CD4-positive, alpha-beta T cell (primary cell): ENCODE measurements at regions of chr11 and their contacts with region 1.

Region 1: GRCh38 chr11:46121724-46122477 is 647 bp upstream of the PHF21A start:
- DNase-seq: peak; percentile 50 to 92 (median 68)
- ATAC-seq: peak; percentile 53
- H3K4me3 ChIP-seq: peak overlapping the region; percentile 72
- H3K4me3 Mint-ChIP-seq: peak overlapping the region; percentile 95
- H3K27ac ChIP-seq: peak overlapping the region in 1 of 2 donors; percentile 53
- H3K27ac Mint-ChIP-seq: peak overlapping the region; percentile 85
- H3K4me1 ChIP-seq: peaks cover 10% of the 10 kb centered on the region
- H3K4me1 Mint-ChIP-seq: peaks cover 34% of the 10 kb centered on the region
- H3K27me3 ChIP-seq: no peaks in the 10 kb centered on the region
- H3K27me3 Mint-ChIP-seq: peaks cover 4% of the 10 kb centered on the region
- CTCF ChIP-seq: no peak

Region 2: DNA sequence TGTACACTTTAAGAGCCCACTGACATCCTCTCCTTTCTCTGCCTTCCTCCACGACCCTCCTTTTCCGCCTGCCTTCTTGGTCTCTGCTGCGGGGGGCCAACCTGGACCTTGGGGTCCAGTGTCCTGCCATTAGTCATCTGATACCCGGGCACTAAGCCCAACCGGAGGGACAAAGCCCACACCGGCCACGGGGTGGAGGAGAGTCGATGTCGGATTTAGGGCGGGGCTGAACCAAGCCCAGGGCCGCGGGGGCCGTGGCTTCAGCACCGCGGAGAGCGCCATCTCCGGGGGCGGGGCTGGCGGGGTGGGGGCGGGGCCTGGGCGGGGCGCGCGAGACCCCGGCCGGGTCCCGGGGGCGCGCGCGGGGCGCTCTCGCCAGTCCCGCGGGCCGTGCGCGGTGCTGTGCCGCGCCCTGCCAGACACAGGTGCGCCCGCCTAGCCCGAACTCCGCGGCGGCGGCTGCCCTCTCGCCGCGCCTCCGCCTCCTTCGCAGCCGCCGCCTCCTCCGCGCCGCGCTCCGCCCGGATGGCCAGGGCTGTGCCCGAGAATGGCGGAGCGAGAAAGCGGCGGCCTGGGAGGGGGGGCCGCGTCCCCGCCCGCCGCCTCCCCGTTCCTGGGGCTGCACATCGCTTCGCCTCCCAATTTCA is 236.5 kb before region 1 on chr11 and contains the start of gene MAPK8IP1:
- CTCF ChIA-PET with region 1: no interaction called
- POLR2A ChIA-PET with region 1: no interaction called
- intact Hi-C with region 1: no loop called
- DNase-seq: peak; percentile 14 to 83 (median 46)
- ATAC-seq: peak; percentile 74
- H3K4me3 ChIP-seq: peak within 1 kb of the TSS; percentile 41
- H3K4me3 Mint-ChIP-seq: peak within 1 kb of the TSS; percentile 81
- H3K27ac ChIP-seq: no peak within 1 kb of the TSS
- H3K27ac Mint-ChIP-seq: peak within 1 kb of the TSS; percentile 77
- H3K4me1 ChIP-seq: peaks cover 13% of the 10 kb centered on the region
- H3K4me1 Mint-ChIP-seq: peaks cover 11% of the 10 kb centered on the region
- H3K27me3 ChIP-seq: no peaks in the 10 kb centered on the region
- H3K27me3 Mint-ChIP-seq: peaks cover 5% of the 10 kb centered on the region
- CTCF ChIP-seq: no peak
- total RNA-seq, gene MAPK8IP1: 2.3 to 2.4 TPM

Region 3: DNA sequence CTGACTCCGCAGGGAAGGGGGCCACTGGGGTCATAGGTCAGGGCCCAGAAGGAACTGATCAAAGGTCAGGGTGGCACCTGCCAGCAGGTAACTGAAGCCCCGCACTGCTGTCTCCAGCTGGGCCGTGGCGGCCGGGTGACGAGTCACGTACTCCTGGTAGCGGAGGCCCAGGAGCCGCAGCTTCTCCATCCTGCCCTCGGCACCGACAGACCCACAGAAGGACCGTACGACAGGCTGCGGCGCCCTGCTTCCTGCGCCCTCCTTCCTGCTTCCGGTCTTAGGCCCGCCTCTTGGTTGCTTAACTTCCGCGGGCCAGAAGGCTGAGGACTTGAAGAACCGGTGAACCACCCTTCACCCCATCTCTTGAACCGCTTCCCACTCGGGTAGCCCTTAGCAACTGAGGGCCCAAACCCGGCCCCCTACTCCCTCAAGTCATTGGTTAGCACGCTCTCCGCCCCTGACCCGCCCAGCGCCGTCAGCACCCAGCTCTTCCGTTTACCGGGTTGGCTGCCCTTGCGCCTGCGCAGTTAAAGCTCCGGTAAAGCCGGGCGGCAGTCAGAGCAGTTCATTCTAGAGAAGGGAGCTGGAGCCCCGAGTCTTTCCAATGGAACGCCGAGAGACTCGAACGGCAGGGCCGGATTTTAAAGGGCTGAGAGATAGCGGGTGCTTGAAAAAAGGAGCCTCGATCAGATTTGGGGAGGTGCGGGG is 204.1 kb before region 1 on chr11 and contains the start of gene PEX16:
- CTCF ChIA-PET with region 1: no interaction called
- POLR2A ChIA-PET with region 1: no interaction called
- intact Hi-C with region 1: loop called in 1 of 2 experiments (anchors 5 kb)
- DNase-seq: peak; percentile 87 to 99 (median 94)
- ATAC-seq: peak; percentile 89
- H3K4me3 ChIP-seq: peak within 1 kb of the TSS; percentile 93
- H3K4me3 Mint-ChIP-seq: peak within 1 kb of the TSS; percentile 99
- H3K27ac ChIP-seq: peak within 1 kb of the TSS; percentile 90 to 95
- H3K27ac Mint-ChIP-seq: peak within 1 kb of the TSS; percentile 94
- H3K4me1 ChIP-seq: peaks cover 70% of the 10 kb centered on the region
- H3K4me1 Mint-ChIP-seq: peaks cover 54% of the 10 kb centered on the region
- H3K27me3 ChIP-seq: peaks cover 0 to 6% of the 10 kb centered on the region in 2 experiments
- H3K27me3 Mint-ChIP-seq: peaks cover 5% of the 10 kb centered on the region
- CTCF ChIP-seq: no peak
- total RNA-seq, gene PEX16: 56.3 to 62.0 TPM

Region 4: GRCh38 chr11:46100670-46101069 is 21.2 kb before region 1 on chr11:
- CTCF ChIA-PET with region 1: interaction called, 11 read pairs
- POLR2A ChIA-PET with region 1: interaction called, 6 read pairs
- intact Hi-C with region 1: loop called in 1 of 2 experiments (anchors 2 kb)
- DNase-seq: peak in 2 of 14 experiments; percentile 20 to 32
- ATAC-seq: peak; percentile 46
- H3K4me3 ChIP-seq: no peak overlapping the region
- H3K4me3 Mint-ChIP-seq: peak overlapping the region; percentile 47
- H3K27ac ChIP-seq: no peak overlapping the region
- H3K27ac Mint-ChIP-seq: peak overlapping the region; percentile 87
- H3K4me1 ChIP-seq: peaks cover 6% of the 10 kb centered on the region
- H3K4me1 Mint-ChIP-seq: peaks cover 79% of the 10 kb centered on the region
- H3K27me3 ChIP-seq: no peaks in the 10 kb centered on the region
- H3K27me3 Mint-ChIP-seq: no peaks in the 10 kb centered on the region
- CTCF ChIP-seq: no peak

Region 5: GRCh38 chr11:46238967-46239800 is 117.3 kb after region 1 on chr11:
- CTCF ChIA-PET with region 1: no interaction called
- POLR2A ChIA-PET with region 1: interaction called, 3 read pairs
- intact Hi-C with region 1: loop called (anchors 5 to 10 kb)
- DNase-seq: peak; percentile 53 to 91 (median 78)
- ATAC-seq: peak; percentile 80
- H3K4me3 ChIP-seq: peak overlapping the region; percentile 41
- H3K4me3 Mint-ChIP-seq: peak overlapping the region; percentile 65
- H3K27ac ChIP-seq: no peak overlapping the region
- H3K27ac Mint-ChIP-seq: no peak overlapping the region
- H3K4me1 ChIP-seq: peaks cover 38% of the 10 kb centered on the region
- H3K4me1 Mint-ChIP-seq: peaks cover 15% of the 10 kb centered on the region
- H3K27me3 ChIP-seq: peaks cover 14 to 15% of the 10 kb centered on the region in 2 experiments
- H3K27me3 Mint-ChIP-seq: peaks cover 49% of the 10 kb centered on the region
- CTCF ChIP-seq: peak; percentile 97

Region 6: GRCh38 chr11:46346886-46347636 is 225.2 kb after region 1 on chr11 and contains the start of gene DGKZ:
- CTCF ChIA-PET with region 1: interaction called, 3 read pairs
- POLR2A ChIA-PET with region 1: no interaction called
- intact Hi-C with region 1: loop called in 1 of 2 experiments (anchors 5 kb)
- DNase-seq: peak; percentile 77 to 97 (median 88)
- ATAC-seq: peak; percentile 77
- H3K4me3 ChIP-seq: peak within 1 kb of the TSS; percentile 99
- H3K4me3 Mint-ChIP-seq: peak within 1 kb of the TSS; percentile 95
- H3K27ac ChIP-seq: peak within 1 kb of the TSS; percentile 44 to 73
- H3K27ac Mint-ChIP-seq: peak within 1 kb of the TSS; percentile 89
- H3K4me1 ChIP-seq: peaks cover 86% of the 10 kb centered on the region
- H3K4me1 Mint-ChIP-seq: peaks cover 83% of the 10 kb centered on the region
- H3K27me3 ChIP-seq: no peaks in the 10 kb centered on the region
- H3K27me3 Mint-ChIP-seq: no peaks in the 10 kb centered on the region
- CTCF ChIP-seq: peak; percentile 34
- total RNA-seq, gene DGKZ: 159 to 166 TPM

Region 7: GRCh38 chr11:47426061-47426956 is 1304.4 kb after region 1 on chr11 and contains the start of gene PSMC3:
- CTCF ChIA-PET with region 1: no interaction called
- POLR2A ChIA-PET with region 1: no interaction called
- intact Hi-C with region 1: loop called in 1 of 2 experiments (anchors 10 kb)
- DNase-seq: peak; percentile 93 to 99 (median 98)
- ATAC-seq: peak; percentile 98
- H3K4me3 ChIP-seq: peak within 1 kb of the TSS; percentile 100
- H3K4me3 Mint-ChIP-seq: peak within 1 kb of the TSS; percentile 100
- H3K27ac ChIP-seq: peak within 1 kb of the TSS; percentile 84
- H3K27ac Mint-ChIP-seq: peak within 1 kb of the TSS; percentile 90
- H3K4me1 ChIP-seq: peaks cover 30% of the 10 kb centered on the region
- H3K4me1 Mint-ChIP-seq: peaks cover 25% of the 10 kb centered on the region
- H3K27me3 ChIP-seq: no peaks in the 10 kb centered on the region
- H3K27me3 Mint-ChIP-seq: no peaks in the 10 kb centered on the region
- CTCF ChIP-seq: no peak
- total RNA-seq, gene PSMC3: 51.3 to 59.5 TPM